CD4-positive, alpha-beta memory T cell (primary cell): ENCODE measurements at regions of chr13 and their contacts with region 1.

Region 1: GRCh38 chr13:45340926-45341750 is at the start of gene TPT1:
- DNase-seq: peak; percentile 99 to 100 (median 99)
- H3K4me3 ChIP-seq: peak within 1 kb of the TSS; percentile 90 to 94
- H3K4me3 Mint-ChIP-seq: peak within 1 kb of the TSS; percentile 92 to 100 (median 98)
- H3K27ac ChIP-seq: peak within 1 kb of the TSS; percentile 100
- H3K27ac Mint-ChIP-seq: peak within 1 kb of the TSS; percentile 80 to 100 (median 100)
- H3K4me1 ChIP-seq: peaks cover 55% of the 10 kb centered on the region
- H3K4me1 Mint-ChIP-seq: peaks cover 37 to 68% (median 50%) of the 10 kb centered on the region in 4 donors
- H3K27me3 ChIP-seq: no peaks in the 10 kb centered on the region
- H3K27me3 Mint-ChIP-seq: peaks cover 0 to 3% of the 10 kb centered on the region in 2 donors
- total RNA-seq, gene TPT1: 10,578 to 11,080 TPM

Region 2: GRCh38 chr13:44969551-44970484 is 371.3 kb before region 1 on chr13:
- CTCF ChIA-PET with region 1: no interaction called
- POLR2A ChIA-PET with region 1: no interaction called
- intact Hi-C with region 1: no loop called
- DNase-seq: peak in 4 of 5 donors; percentile 13 to 28 (median 18)
- H3K4me3 ChIP-seq: no peak overlapping the region
- H3K4me3 Mint-ChIP-seq: no peak overlapping the region
- H3K27ac ChIP-seq: no peak overlapping the region
- H3K27ac Mint-ChIP-seq: no peak overlapping the region
- H3K4me1 ChIP-seq: no peaks in the 10 kb centered on the region
- H3K4me1 Mint-ChIP-seq: peaks cover 0 to 1% (median under 1%) of the 10 kb centered on the region in 4 donors
- H3K27me3 ChIP-seq: no peaks in the 10 kb centered on the region
- H3K27me3 Mint-ChIP-seq: no peaks in the 10 kb centered on the region

Region 3: DNA sequence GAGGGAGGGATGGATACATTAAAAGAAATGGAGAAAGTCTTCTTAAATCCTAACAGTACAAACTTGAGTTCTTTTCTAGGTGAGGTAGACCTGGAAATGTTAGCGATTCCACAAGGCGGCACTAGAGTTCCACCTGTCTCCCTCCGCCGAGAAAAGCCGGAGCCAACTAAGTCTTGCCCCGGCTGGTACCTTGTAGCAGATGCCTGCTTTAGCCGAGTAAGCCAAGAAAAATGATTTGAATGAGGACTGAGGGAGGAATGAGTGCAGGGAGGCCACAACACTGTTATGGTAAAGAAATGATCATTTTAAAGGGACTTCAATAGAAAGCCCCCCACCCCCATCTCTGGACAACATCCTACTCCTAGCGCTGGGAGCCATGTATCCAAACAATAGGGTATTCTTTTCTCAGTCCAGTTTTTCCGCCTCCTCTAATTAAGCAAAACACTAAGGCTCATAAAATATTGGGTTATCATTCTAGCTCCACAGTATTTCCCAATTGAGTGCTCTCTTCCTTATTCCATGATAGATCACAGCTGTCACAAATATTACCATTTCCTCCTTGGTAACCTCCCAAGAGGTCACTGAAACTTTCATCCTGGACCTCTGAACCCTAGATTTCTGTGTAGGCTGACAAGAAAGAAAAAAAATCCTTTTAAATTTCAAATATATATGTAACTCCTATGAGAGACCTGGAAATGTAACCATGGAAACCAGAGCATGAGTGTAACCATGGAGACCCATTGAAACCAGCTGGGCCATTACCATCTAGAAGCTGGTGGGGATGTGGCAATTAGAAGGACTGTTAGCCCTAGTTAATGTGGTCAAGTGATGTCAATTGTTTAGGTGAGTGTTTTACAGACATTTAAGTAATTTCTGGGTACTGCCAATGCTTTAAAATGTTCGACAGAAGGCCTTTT is 293.5 kb before region 1 on chr13:
- CTCF ChIA-PET with region 1: interaction called, 12 read pairs
- POLR2A ChIA-PET with region 1: interaction called, 3 read pairs
- intact Hi-C with region 1: loop called (anchors 1 kb)
- DNase-seq: peak; percentile 68 to 74 (median 72)
- H3K4me3 ChIP-seq: peak overlapping the region in 1 of 2 donors; percentile 31
- H3K4me3 Mint-ChIP-seq: peak overlapping the region; percentile 63 to 87 (median 80)
- H3K27ac ChIP-seq: no peak overlapping the region
- H3K27ac Mint-ChIP-seq: peak overlapping the region in 4 of 7 donors; percentile 20 to 86 (median 47)
- H3K4me1 ChIP-seq: peaks cover 16% of the 10 kb centered on the region
- H3K4me1 Mint-ChIP-seq: peaks cover 9 to 14% (median 10%) of the 10 kb centered on the region in 4 donors
- H3K27me3 ChIP-seq: no peaks in the 10 kb centered on the region
- H3K27me3 Mint-ChIP-seq: peaks cover 5 to 16% of the 10 kb centered on the region in 2 donors

Region 4: DNA sequence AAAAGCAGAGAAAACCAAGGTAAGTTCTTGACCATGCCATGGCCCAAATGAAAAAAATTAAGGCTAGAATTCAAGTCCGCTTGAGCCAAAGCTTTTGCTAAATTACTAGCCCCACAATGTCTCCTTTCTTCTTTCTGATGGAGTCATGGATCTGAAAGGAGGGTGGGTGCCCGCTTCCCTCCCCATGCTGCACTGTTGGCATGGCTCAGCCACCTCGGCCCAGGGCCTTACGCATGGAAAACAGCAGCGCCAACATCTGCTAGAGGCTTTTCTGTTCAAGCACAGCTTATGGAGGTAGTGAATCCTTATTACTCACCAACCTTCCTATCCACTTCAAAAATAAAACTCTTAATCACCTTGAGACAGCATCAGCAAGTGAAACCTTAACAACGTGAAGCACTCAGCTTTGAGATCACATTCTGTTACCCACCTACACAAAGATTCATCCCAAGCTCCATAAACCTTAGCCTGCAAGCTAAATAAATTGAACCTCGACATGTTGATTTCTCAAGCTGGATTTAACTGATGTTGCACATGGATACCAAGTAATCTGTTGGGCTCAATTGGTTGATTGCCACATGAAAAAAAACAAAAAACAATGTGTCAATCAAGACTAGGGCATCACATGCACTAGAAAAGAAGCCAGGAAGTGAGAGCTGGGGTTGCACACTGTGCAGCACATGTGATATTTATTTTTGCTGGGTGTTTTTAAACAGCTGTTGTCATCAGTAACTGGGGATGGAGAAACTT is 43.5 kb before region 1 on chr13:
- CTCF ChIA-PET with region 1: interaction called, 5 read pairs
- POLR2A ChIA-PET with region 1: interaction called, 13 read pairs
- intact Hi-C with region 1: no loop called
- DNase-seq: peak in 4 of 5 donors; percentile 45 to 56 (median 50)
- H3K4me3 ChIP-seq: no peak overlapping the region
- H3K4me3 Mint-ChIP-seq: peak overlapping the region in 6 of 8 donors; percentile 32 to 71 (median 38)
- H3K27ac ChIP-seq: peak overlapping the region; percentile 10
- H3K27ac Mint-ChIP-seq: peak overlapping the region; percentile 47 to 90 (median 81)
- H3K4me1 ChIP-seq: peaks cover 40% of the 10 kb centered on the region
- H3K4me1 Mint-ChIP-seq: peaks cover 31 to 50% (median 39%) of the 10 kb centered on the region in 4 donors
- H3K27me3 ChIP-seq: no peaks in the 10 kb centered on the region
- H3K27me3 Mint-ChIP-seq: peaks cover 1 to 3% of the 10 kb centered on the region in 2 donors

Region 5: GRCh38 chr13:45352031-45352430 is 10.9 kb after region 1 on chr13:
- CTCF ChIA-PET with region 1: interaction called, 4 read pairs
- POLR2A ChIA-PET with region 1: interaction called, 16 read pairs
- intact Hi-C with region 1: no loop called
- DNase-seq: no peak
- H3K4me3 ChIP-seq: no peak overlapping the region
- H3K4me3 Mint-ChIP-seq: no peak overlapping the region
- H3K27ac ChIP-seq: no peak overlapping the region
- H3K27ac Mint-ChIP-seq: peak overlapping the region in 1 of 7 donors; percentile 6
- H3K4me1 ChIP-seq: no peaks in the 10 kb centered on the region
- H3K4me1 Mint-ChIP-seq: peaks cover 5 to 10% (median 7%) of the 10 kb centered on the region in 4 donors
- H3K27me3 ChIP-seq: no peaks in the 10 kb centered on the region
- H3K27me3 Mint-ChIP-seq: no peaks in the 10 kb centered on the region

Region 6: GRCh38 chr13:45393941-45394570 is 52.9 kb after region 1 on chr13:
- CTCF ChIA-PET with region 1: interaction called, 8 read pairs
- POLR2A ChIA-PET with region 1: interaction called, 7 read pairs
- intact Hi-C with region 1: loop called (anchors 2 kb)
- DNase-seq: peak in 3 of 5 donors; percentile 22 to 31 (median 26)
- H3K4me3 ChIP-seq: no peak overlapping the region
- H3K4me3 Mint-ChIP-seq: no peak overlapping the region
- H3K27ac ChIP-seq: no peak overlapping the region
- H3K27ac Mint-ChIP-seq: peak overlapping the region; percentile 53 to 94 (median 77)
- H3K4me1 ChIP-seq: peaks cover 50% of the 10 kb centered on the region
- H3K4me1 Mint-ChIP-seq: peaks cover 35 to 49% (median 45%) of the 10 kb centered on the region in 4 donors
- H3K27me3 ChIP-seq: no peaks in the 10 kb centered on the region
- H3K27me3 Mint-ChIP-seq: no peaks in the 10 kb centered on the region

Region 7: GRCh38 chr13:45464687-45465453 is 123.7 kb after region 1 on chr13 and contains the start of gene COG3:
- CTCF ChIA-PET with region 1: interaction called, 4 read pairs
- POLR2A ChIA-PET with region 1: interaction called, 34 read pairs
- intact Hi-C with region 1: loop called (anchors 1 kb)
- DNase-seq: peak; percentile 94 to 97 (median 97)
- H3K4me3 ChIP-seq: peak within 1 kb of the TSS; percentile 62 to 81
- H3K4me3 Mint-ChIP-seq: peak within 1 kb of the TSS; percentile 90 to 95 (median 92)
- H3K27ac ChIP-seq: peak within 1 kb of the TSS; percentile 98
- H3K27ac Mint-ChIP-seq: peak within 1 kb of the TSS; percentile 88 to 97 (median 94)
- H3K4me1 ChIP-seq: peaks cover 53% of the 10 kb centered on the region
- H3K4me1 Mint-ChIP-seq: peaks cover 36 to 65% (median 49%) of the 10 kb centered on the region in 4 donors
- H3K27me3 ChIP-seq: no peaks in the 10 kb centered on the region
- H3K27me3 Mint-ChIP-seq: no peaks in the 10 kb centered on the region
- total RNA-seq, gene COG3: 51.1 to 59.8 TPM